IMR-90 (cell line): ENCODE measurements at regions of chr16 and their contacts with region 1.

Region 1: DNA sequence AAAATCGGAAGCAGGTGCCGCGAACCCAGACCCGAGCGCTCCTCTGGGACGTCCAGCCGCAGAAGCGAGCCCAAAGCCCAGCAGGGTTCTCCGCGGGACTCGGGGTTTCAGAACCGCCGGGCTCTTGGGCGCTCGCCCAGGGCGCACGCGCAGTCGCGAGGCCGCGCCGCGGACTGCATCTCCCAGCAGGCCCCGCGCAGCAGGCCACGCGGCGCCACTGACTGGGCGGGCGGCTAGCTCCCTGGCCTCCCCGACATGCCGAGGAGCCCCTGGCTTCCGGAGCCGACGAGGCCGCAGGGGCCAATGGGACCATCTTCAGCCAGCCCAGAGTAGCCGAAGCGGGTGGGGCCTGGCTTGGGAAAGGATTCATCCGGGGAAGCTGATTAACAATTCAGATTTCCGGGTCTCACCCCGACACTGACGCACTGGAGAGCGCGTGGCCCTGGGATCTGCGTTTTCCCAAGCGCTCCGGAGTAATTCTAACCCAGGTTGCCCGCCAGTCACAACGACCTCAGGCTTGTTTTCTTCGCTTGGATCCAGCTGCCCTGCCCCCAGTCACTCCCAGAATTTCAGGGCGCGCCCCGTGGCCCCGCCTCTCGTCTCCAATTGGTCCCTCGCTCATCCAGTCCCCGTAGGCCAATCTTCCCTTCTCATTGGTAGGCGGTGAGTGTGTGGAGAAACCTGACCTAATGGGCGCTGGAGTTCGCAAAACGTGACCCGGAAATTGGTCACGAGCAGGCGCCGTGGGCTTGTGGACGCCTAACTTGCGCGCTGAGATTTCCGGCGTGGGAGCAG is at the start of gene ZNF263:
- DNase-seq: peak; percentile 98
- ATAC-seq: peak; percentile 94
- H3K4me3 ChIP-seq: peak within 1 kb of the TSS; percentile 79
- H3K27ac ChIP-seq: peak within 1 kb of the TSS; percentile 87
- H3K4me1 ChIP-seq: peaks cover 6% of the 10 kb centered on the region; the same call in 1 of the 2 replicates
- H3K27me3 ChIP-seq: no peaks in the 10 kb centered on the region
- CTCF ChIP-seq: no peak
- POLR2A ChIP-seq: peak; percentile 87
- RAD21 ChIP-seq: no peak
- total RNA-seq, gene ZNF263: 36.1 and 40.3 TPM in 2 replicates

Region 2: DNA sequence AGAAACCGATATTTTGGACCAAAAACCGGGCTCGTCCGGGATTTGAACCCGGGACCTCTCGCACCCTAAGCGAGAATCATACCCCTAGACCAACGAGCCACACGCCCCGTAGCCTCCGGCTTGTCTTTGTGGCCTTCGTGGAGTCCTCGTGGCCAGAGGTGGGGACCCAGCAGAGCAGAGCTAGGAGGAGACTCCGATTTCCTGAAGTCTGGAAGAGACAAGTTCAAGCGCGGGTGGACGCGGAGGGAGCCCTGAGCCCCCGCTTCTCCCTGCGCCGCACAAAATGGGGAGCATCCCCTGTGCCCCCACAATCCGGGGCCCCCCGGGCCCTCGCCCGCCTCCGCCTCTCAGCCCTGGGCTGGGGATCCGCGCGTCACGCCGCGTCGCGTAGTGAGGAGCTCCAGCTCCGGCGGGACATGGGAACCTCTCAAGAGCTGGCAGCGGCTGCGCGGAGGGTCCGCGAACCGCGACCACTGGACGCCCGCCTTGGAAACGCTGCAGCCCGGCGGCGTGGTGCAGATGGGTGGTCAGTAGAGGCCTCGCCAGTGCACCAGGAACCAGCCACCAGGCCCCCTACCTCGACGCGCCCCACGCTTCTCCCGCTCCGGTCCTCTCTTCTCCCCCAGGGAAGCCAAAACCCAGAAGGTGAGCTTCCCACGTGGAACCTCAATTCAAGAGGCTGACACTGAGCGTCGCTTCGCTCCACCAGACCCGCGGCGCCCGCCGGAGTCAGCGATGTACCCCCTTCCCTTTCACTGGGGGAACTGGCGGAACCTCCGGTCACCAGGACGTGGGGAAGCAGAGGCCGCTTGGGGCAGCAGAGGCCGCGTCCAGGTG is 100.1 kb before region 1 on chr16:
- CTCF ChIA-PET with region 1: no interaction called
- POLR2A ChIA-PET with region 1: no interaction called
- dilution Hi-C with region 1: no loop called
- in situ Hi-C with region 1: no loop called
- intact Hi-C with region 1: no loop called
- DNase-seq: peak; percentile 55
- ATAC-seq: peak; percentile 79
- H3K4me3 ChIP-seq: peak overlapping the region; percentile 61
- H3K27ac ChIP-seq: no peak overlapping the region
- H3K4me1 ChIP-seq: no peaks in the 10 kb centered on the region; the same call in 1 of the 2 replicates
- H3K27me3 ChIP-seq: peaks cover 26% of the 10 kb centered on the region
- CTCF ChIP-seq: peak; percentile 41
- POLR2A ChIP-seq: no peak
- RAD21 ChIP-seq: peak; percentile 38

Region 3: GRCh38 chr16:3234543-3235541 is 48.1 kb before region 1 on chr16 and contains the start of gene ZNF200:
- CTCF ChIA-PET with region 1: no interaction called
- POLR2A ChIA-PET with region 1: no interaction called
- dilution Hi-C with region 1: no loop called
- in situ Hi-C with region 1: no loop called
- intact Hi-C with region 1: loop called (anchors 2 kb)
- DNase-seq: peak; percentile 94
- ATAC-seq: peak; percentile 98
- H3K4me3 ChIP-seq: peak within 1 kb of the TSS; percentile 95
- H3K27ac ChIP-seq: peak within 1 kb of the TSS; percentile 95
- H3K4me1 ChIP-seq: no peaks in the 10 kb centered on the region
- H3K27me3 ChIP-seq: no peaks in the 10 kb centered on the region
- CTCF ChIP-seq: no peak
- POLR2A ChIP-seq: peak; percentile 73
- RAD21 ChIP-seq: no peak
- total RNA-seq, gene ZNF200: 7.5 and 8.3 TPM in 2 replicates

Region 4: GRCh38 chr16:3264137-3265036 is 18.5 kb before region 1 on chr16:
- CTCF ChIA-PET with region 1: interaction called, 4 read pairs
- POLR2A ChIA-PET with region 1: no interaction called
- dilution Hi-C with region 1: no loop called
- in situ Hi-C with region 1: no loop called
- intact Hi-C with region 1: loop called (anchors 2 kb)
- DNase-seq: peak; percentile 96
- ATAC-seq: peak; percentile 98
- H3K4me3 ChIP-seq: peak overlapping the region; percentile 77
- H3K27ac ChIP-seq: peak overlapping the region; percentile 58
- H3K4me1 ChIP-seq: 0 out of 2 replicates have a peak, but pooled peaks cover 2% of the 10 kb centered on the region
- H3K27me3 ChIP-seq: no peaks in the 10 kb centered on the region
- CTCF ChIP-seq: peak; percentile 35
- POLR2A ChIP-seq: peak; percentile 55
- RAD21 ChIP-seq: peak; percentile 25; the same call in 1 of the 2 replicates

Region 5: GRCh38 chr16:3509470-3509928 is 226.6 kb after region 1 on chr16:
- CTCF ChIA-PET with region 1: no interaction called
- POLR2A ChIA-PET with region 1: no interaction called
- dilution Hi-C with region 1: no loop called
- in situ Hi-C with region 1: no loop called
- intact Hi-C with region 1: loop called (anchors 10 kb)
- DNase-seq: no peak
- ATAC-seq: no peak
- H3K4me3 ChIP-seq: no peak overlapping the region
- H3K27ac ChIP-seq: no peak overlapping the region
- H3K4me1 ChIP-seq: peaks cover 8% of the 10 kb centered on the region
- H3K27me3 ChIP-seq: no peaks in the 10 kb centered on the region
- CTCF ChIP-seq: no peak
- POLR2A ChIP-seq: no peak
- RAD21 ChIP-seq: no peak